Transverse colon (tissue), 4 donors: ENCODE measurements at regions of chr7 and their contacts with region 1.

Region 1: GRCh38 chr7:41478187-41478586 is 224.7 kb downstream of the INHBA start:
- DNase-seq: no peak
- H3K4me3 ChIP-seq: no peak overlapping the region
- H3K27ac ChIP-seq: no peak overlapping the region
- H3K4me1 ChIP-seq: no peaks in the 10 kb centered on the region
- H3K27me3 ChIP-seq: no peaks in the 10 kb centered on the region
- CTCF ChIP-seq: no peak
- EP300 ChIP-seq: no peak
- POLR2A ChIP-seq: no peak

Region 2: DNA sequence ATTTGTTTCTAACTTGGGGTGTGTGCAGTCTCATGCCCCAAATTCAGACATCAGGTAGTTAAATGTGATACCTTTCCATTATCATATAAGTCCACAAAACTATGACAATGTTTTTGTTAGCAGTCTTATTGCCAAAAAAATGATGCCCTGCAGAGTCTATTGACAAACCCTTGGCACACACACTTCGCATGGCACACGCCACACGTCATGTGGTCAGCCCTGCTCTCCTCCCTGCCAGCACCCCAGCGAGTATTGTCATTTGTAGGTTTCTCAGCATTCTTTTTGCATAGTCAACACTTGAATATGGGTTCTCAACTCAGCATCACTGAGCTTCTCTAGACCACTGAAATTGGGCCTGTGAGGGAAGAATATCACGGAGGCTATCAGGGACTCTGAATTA is 131.3 kb before region 1 on chr7:
- in situ Hi-C with region 1: no loop called
- intact Hi-C with region 1: no loop called
- DNase-seq: no peak
- H3K4me3 ChIP-seq: no peak overlapping the region
- H3K27ac ChIP-seq: no peak overlapping the region
- H3K4me1 ChIP-seq: no peaks in the 10 kb centered on the region
- H3K27me3 ChIP-seq: no peaks in the 10 kb centered on the region
- CTCF ChIP-seq: no peak
- EP300 ChIP-seq: no peak
- POLR2A ChIP-seq: no peak

Region 3: DNA sequence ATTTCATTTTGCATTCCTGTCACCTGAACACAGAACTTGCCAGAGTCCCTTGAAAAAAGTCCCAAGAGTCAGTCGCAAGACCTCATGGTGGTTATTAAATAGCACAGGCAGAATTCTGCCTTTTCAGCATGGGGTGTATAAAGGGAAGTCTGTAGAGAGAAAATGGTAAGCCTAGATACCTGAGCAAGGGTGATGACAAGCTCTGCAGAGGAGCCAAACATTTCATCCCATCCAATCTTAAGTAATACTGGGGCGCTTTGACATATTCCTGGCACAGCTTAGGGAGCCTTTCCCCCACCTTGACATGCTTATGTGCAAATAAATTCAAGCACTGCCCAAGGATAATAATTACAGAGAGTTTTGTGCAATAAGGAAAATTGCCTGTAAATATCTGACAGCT is 11.7 kb after region 1 on chr7:
- in situ Hi-C with region 1: no loop called
- intact Hi-C with region 1: loop called (anchors 1 kb)
- DNase-seq: no peak
- H3K4me3 ChIP-seq: no peak overlapping the region
- H3K27ac ChIP-seq: no peak overlapping the region
- H3K4me1 ChIP-seq: no peaks in the 10 kb centered on the region
- H3K27me3 ChIP-seq: no peaks in the 10 kb centered on the region
- CTCF ChIP-seq: no peak
- EP300 ChIP-seq: no peak
- POLR2A ChIP-seq: no peak